Endothelial cell of umbilical vein (primary cell): ENCODE measurements at regions of chr7 and their contacts with region 1.

Region 1: GRCh38 chr7:143240291-143241168 is 18.7 kb downstream of the TAS2R40 start:
- DNase-seq: peak; percentile 80
- H3K4me3 ChIP-seq: no peak overlapping the region
- H3K27ac ChIP-seq: no peak overlapping the region
- H3K4me1 ChIP-seq: peaks cover 7% of the 10 kb centered on the region
- H3K27me3 ChIP-seq: peaks cover 2 to 8% of the 10 kb centered on the region in 2 experiments
- CTCF ChIP-seq: peak; percentile 82 to 86
- POLR2A ChIP-seq: no peak

Region 2: DNA sequence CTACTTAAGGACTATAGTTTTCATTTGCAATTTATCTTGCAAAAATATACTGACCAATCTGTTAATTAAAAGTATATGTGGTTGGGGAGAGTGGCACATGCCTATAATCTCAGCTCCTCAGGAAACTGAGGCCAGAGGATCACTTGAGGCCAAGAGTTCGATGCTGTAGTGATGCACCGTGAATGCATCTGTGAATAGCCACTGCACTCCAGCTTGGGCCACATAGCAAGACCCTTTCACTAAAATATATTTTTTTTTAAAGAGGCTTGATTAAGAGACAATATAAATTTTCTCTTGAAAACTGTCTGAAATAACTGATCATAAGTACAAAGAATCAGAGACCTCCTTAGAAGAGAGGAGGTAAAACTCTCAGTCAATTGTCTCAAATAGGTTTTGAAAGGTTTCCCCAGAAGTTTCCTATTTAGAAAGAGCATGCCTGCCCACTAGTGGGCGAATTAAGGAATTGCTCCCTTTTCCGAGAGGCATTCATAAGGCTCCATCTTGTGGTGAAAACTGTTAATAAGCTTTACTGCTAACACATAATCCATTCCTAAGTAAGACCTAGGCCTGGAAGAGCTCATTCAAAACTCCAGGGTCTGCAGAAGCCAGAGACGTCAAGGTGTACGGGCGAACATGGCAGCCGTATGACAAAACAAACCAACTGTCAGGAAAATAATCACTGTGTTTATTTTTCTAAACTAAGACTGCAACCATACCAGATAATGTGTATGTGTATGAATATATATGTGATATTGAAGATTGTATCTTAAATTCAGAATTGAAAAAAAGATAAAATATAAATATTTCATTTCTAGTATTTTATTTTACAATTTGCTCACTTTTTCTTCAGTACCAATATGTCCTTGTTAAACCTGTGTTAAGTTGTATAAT is 25.5 kb before region 1 on chr7:
- CTCF ChIA-PET with region 1: interaction called, 17 read pairs
- POLR2A ChIA-PET with region 1: no interaction called
- dilution Hi-C with region 1: no loop called
- intact Hi-C with region 1: no loop called
- DNase-seq: peak; percentile 90
- H3K4me3 ChIP-seq: no peak overlapping the region
- H3K27ac ChIP-seq: no peak overlapping the region
- H3K4me1 ChIP-seq: no peaks in the 10 kb centered on the region
- H3K27me3 ChIP-seq: peaks cover 3 to 5% of the 10 kb centered on the region in 2 experiments
- CTCF ChIP-seq: peak; percentile 95 to 99
- POLR2A ChIP-seq: no peak

Region 3: GRCh38 chr7:143263266-143264195 is 23.0 kb after region 1 on chr7 and contains the start of gene GSTK1:
- CTCF ChIA-PET with region 1: interaction called, 26 read pairs
- POLR2A ChIA-PET with region 1: no interaction called
- dilution Hi-C with region 1: no loop called
- intact Hi-C with region 1: loop called (anchors 1 kb)
- DNase-seq: peak; percentile 76
- H3K4me3 ChIP-seq: peak within 1 kb of the TSS; percentile 45 to 87 (median 80)
- H3K27ac ChIP-seq: peak within 1 kb of the TSS; percentile 52
- H3K4me1 ChIP-seq: peaks cover 8% of the 10 kb centered on the region
- H3K27me3 ChIP-seq: no peaks in the 10 kb centered on the region
- CTCF ChIP-seq: no peak
- POLR2A ChIP-seq: peak; percentile 93
- total RNA-seq, gene GSTK1: 99.4 and 119 TPM in 2 replicates

Region 4: GRCh38 chr7:143299840-143300239 is 59.3 kb after region 1 on chr7:
- CTCF ChIA-PET with region 1: interaction called, 45 read pairs
- POLR2A ChIA-PET with region 1: no interaction called
- dilution Hi-C with region 1: no loop called
- intact Hi-C with region 1: loop called (anchors 1 kb)
- DNase-seq: peak; percentile 29
- H3K4me3 ChIP-seq: no peak overlapping the region
- H3K27ac ChIP-seq: no peak overlapping the region
- H3K4me1 ChIP-seq: peaks cover 23% of the 10 kb centered on the region
- H3K27me3 ChIP-seq: no peaks in the 10 kb centered on the region
- CTCF ChIP-seq: peak; percentile 54 to 69
- POLR2A ChIP-seq: no peak

Region 5: DNA sequence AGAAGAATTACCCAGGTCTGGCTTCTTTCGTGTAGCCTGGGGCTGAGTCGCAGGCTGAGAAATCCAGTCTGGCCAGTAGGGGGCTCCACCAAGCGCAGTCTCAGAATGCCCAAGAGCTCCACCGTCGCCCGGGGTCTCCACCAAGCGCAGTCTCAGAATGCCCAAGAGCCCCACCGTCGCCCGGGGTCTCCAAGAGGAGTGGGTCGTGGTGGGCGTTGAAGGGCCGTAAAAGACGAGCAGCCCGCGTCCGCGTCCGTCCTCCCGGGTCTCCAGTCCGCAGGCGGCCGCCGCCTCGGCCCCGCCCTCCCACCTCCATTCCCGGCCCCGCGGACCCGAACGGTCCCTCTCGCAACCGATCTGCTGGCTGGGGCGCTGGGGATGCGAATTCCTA is 139.7 kb after region 1 on chr7:
- CTCF ChIA-PET with region 1: interaction called, 10 read pairs
- POLR2A ChIA-PET with region 1: interaction called, 3 read pairs
- dilution Hi-C with region 1: no loop called
- intact Hi-C with region 1: loop called (anchors 1 kb)
- DNase-seq: peak; percentile 89
- H3K4me3 ChIP-seq: peak overlapping the region; percentile 59 to 94 (median 67)
- H3K27ac ChIP-seq: peak overlapping the region; percentile 98
- H3K4me1 ChIP-seq: peaks cover 47% of the 10 kb centered on the region
- H3K27me3 ChIP-seq: no peaks in the 10 kb centered on the region
- CTCF ChIP-seq: peak; percentile 85 to 89
- POLR2A ChIP-seq: peak; percentile 54

Region 6: GRCh38 chr7:143490717-143491306 is 250.3 kb after region 1 on chr7:
- CTCF ChIA-PET with region 1: interaction called, 9 read pairs
- POLR2A ChIA-PET with region 1: no interaction called
- dilution Hi-C with region 1: no loop called
- intact Hi-C with region 1: loop called (anchors 5 kb)
- DNase-seq: peak; percentile 58
- H3K4me3 ChIP-seq: no peak overlapping the region
- H3K27ac ChIP-seq: peak overlapping the region; percentile 99
- H3K4me1 ChIP-seq: peaks cover 43% of the 10 kb centered on the region
- H3K27me3 ChIP-seq: no peaks in the 10 kb centered on the region
- CTCF ChIP-seq: peak; percentile 60 to 66
- POLR2A ChIP-seq: no peak

Region 7: DNA sequence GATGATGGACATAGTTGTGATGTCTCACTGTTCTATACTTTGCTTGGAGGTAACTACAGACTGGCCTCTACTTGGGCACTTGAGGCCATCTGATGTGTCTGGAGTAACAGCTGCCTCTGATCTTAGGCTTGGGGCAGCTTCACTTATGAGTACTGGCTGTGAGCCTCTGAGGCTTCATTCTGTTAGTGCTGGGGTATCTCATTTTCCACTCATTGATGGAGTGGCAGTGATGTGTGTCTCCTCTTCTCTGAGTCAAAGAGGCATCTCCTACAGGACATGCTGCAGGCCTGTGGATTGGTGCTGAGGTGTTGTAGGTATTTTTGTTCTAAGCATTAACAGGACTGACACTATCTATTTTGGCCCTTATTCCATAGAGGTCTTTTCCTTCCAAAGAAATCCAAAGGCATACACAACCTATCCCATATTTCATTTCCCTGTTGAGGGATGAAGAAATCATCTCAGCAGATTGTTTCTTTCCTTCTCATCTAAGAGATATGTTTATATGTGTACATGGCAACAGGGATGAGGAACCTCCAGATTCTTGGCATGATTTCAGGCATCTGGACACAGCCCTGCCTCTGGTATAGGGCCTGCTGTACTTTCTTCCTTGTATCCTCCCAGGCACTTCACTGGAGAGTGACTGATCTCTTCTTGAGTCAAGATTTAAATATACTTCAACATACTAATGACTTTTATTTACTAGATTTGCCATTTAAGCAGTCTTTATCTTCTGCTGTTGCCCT is 1228.6 kb after region 1 on chr7:
- CTCF ChIA-PET with region 1: no interaction called
- POLR2A ChIA-PET with region 1: no interaction called
- dilution Hi-C with region 1: no loop called
- intact Hi-C with region 1: no loop called
- DNase-seq: no peak
- H3K4me3 ChIP-seq: no peak overlapping the region
- H3K27ac ChIP-seq: no peak overlapping the region
- H3K4me1 ChIP-seq: no peaks in the 10 kb centered on the region
- H3K27me3 ChIP-seq: no peaks in the 10 kb centered on the region
- CTCF ChIP-seq: no peak
- POLR2A ChIP-seq: no peak